Gastrocnemius medialis (tissue), 4 donors: ENCODE measurements at regions of chr11 and their contacts with region 1.

Region 1: DNA sequence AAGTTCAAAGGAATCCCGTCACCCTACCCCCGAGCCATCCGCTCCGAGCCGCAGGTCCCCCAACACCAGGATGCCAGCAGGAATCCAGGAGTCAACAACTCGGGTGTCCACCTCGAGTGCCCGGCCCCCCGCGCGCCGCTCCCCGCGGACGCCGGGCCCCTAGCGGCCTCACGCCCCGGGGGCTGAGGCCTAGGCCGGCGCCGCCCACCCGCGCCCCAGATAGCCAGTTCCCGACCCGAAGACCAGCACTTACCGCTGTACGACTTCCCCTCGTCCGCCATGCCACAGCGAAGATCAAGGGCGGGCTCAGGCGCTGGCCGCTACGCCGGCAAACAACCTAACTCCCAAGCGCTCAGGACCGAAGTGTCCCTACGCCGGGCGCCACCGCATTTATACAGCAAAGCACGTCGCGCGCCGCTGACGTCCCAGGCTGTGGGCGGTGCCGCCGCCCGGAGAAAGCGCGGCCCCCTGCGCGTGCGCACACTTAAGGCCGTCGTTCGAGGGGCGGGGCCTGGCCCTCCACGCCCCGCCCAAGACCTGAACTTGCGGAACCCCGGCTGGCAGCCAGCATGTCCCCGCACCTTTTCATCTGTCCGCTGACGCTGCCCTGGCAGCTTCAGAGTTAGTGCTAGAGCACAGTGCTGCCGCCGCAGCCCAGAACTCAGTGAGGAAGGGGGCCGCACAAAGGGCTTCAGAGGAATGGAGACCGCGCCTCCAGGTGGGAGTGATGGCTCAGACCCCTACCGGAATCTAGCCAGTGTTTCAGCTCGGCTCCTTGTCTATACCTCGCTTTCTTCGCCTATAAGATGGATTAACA is at the start of gene NXF1:
- DNase-seq: peak; percentile 91 to 95
- ATAC-seq: peak; percentile 77 to 79
- H3K4me3 ChIP-seq: peak within 1 kb of the TSS; percentile 69 to 95 (median 78)
- H3K27ac ChIP-seq: peak within 1 kb of the TSS; percentile 91 to 98 (median 94)
- H3K4me1 ChIP-seq: peaks cover 24 to 28% of the 10 kb centered on the region in 2 donors
- H3K27me3 ChIP-seq: no peaks in the 10 kb centered on the region
- CTCF ChIP-seq: peak in 4 of 5 experiments; percentile 23 to 41 (median 38)
- POLR2A ChIP-seq: peak; percentile 100
- total RNA-seq, gene NXF1: 27.2 to 47.1 (median 46.1) TPM

Region 2: DNA sequence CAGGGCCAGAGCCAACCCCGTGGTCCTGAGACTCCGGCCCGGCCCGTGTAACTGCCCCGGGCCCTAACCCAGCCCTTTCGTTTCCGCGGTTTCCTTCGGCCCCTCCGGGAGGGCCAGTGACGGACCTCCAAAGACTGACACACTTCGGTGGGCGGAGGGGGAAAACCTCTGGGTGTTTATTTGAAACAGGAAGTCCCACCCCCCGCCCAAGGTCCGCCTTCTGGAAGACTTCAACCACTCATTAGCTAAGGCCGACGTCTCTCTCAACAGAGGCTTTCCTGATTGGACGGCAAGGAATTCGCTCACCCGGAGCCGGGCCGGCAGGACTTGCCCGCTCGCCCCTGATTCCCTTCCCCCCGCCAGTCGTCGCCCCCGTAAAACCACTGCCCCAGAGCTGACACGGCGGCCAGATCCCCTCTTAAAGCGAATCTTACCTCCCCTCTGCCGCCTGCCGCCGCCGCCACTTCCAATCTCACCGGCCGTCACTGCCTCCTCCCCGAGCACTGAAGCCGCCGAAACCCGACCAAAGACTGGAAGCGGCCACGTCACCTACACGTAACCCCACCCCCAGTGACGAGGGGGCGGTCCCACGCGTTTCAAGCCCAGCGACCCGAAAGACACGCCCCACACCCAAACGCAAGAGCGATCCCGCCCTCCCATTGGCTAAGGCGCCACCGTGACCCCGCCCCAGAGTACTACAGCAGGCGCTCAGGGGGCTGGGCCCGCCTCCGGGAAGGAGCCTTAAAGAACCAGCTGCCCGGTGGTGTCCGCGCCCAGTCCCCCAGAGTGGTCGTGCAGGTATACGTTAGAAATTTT is 26.4 kb after region 1 on chr11 and contains the start of gene STX5:
- in situ Hi-C with region 1: no loop called
- intact Hi-C with region 1: loop called (anchors 2 kb)
- DNase-seq: peak; percentile 99
- ATAC-seq: peak; percentile 95 to 96
- H3K4me3 ChIP-seq: peak within 1 kb of the TSS; percentile 83 to 100 (median 94)
- H3K27ac ChIP-seq: peak within 1 kb of the TSS; percentile 92 to 100 (median 96)
- H3K4me1 ChIP-seq: peaks cover 27 to 32% of the 10 kb centered on the region in 2 donors
- H3K27me3 ChIP-seq: no peaks in the 10 kb centered on the region
- CTCF ChIP-seq: no peak
- POLR2A ChIP-seq: peak; percentile 89 to 90
- total RNA-seq, gene STX5: 16.2 to 26.0 (median 24.9) TPM

Region 3: DNA sequence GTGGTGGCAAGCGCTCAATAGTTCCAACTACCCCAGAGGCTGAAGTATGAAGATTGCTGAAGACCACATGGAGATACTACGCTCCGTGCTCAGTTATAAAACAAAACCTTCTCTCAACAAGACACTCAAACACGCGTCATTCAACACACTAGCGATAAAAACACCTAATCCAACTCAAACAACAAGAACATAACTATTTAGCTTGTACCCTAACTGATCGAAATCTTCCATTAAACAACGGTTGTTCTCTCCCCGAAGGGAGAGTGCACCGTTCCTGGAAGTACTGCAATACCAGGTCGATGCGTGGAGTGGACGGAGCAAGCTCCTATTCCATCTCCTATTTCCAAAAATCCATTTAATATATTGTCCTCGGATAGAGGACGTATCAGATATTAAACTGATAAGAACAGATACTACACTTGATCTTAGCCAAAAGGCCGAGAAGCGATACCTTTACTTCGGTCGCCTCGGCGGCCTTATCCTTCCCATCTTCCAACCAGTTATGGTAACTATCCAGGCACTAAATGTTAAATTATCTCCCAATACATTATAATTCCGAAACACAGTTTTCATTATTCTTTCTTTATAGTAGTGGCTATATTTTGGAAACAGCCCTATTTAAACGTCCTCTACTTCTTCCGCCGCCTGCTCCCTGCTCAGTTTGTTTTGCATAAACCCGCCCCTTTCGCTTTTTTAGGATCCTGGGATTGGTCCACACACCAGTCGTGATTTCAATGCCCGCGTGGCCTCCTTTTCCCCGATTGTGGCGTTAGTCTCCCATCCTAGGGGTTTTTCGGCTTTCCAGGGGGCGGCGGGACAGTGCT is 36.3 kb after region 1 on chr11:
- in situ Hi-C with region 1: no loop called
- intact Hi-C with region 1: loop called (anchors 2 kb)
- DNase-seq: peak; percentile 85 to 91
- ATAC-seq: peak; percentile 73 to 76
- H3K4me3 ChIP-seq: peak overlapping the region; percentile 82 to 100 (median 96)
- H3K27ac ChIP-seq: peak overlapping the region; percentile 97 to 99 (median 98)
- H3K4me1 ChIP-seq: peaks cover 20% of the 10 kb centered on the region in 2 donors
- H3K27me3 ChIP-seq: no peaks in the 10 kb centered on the region
- CTCF ChIP-seq: peak in 1 of 5 experiments; percentile 5
- POLR2A ChIP-seq: peak; percentile 99 to 100